IMR-90 (cell line): ENCODE measurements at regions of chr15 and their contacts with region 1.

Region 1: DNA sequence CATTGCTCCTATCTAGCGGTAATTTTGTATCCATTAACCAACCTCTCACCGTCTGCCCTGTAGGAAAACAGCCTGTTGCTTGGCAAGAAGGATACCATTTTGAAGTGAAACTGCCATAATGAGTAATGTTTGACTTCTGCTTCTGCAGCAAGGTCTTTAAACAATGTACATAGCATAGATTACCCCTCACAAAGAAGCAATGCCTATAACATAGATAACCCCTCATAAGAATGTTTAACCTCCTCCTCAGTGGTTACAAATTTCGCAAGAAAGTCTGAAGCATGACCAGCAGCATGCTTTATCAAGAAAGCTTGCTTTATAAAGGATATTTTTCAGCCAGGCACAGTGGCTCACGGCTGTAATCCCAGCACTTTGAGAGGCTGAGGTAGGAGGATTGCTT is 61.2 kb upstream of the MFGE8 start:
- DNase-seq: peak; percentile 75
- ATAC-seq: peak; percentile 77
- H3K4me3 ChIP-seq: no peak overlapping the region
- H3K27ac ChIP-seq: peak overlapping the region; percentile 75; the same call in 1 of the 2 replicates
- H3K4me1 ChIP-seq: peaks cover 3% of the 10 kb centered on the region
- H3K27me3 ChIP-seq: no peaks in the 10 kb centered on the region
- CTCF ChIP-seq: no peak
- POLR2A ChIP-seq: no peak
- RAD21 ChIP-seq: no peak

Region 2: DNA sequence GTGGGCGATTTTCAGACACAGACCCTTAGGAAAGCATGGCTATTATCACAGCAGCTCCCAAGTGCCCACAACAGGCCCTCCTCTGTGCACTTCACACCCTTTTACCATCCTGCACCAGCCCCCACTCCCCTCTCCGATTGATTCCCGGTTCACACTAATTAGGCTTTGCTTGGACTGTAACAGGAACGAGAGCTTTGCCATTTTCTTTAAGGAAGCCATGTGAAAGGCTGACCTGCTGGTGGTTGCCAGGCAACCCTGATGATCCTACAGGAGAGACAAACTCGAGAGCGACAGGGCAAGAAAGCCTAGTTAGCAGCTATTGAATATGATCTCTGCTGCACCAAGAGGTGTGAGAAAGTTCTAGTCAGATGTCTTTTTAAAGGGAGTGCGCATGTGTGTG is 399.7 kb before region 1 on chr15:
- CTCF ChIA-PET with region 1: no interaction called
- POLR2A ChIA-PET with region 1: no interaction called
- dilution Hi-C with region 1: no loop called
- in situ Hi-C with region 1: no loop called
- intact Hi-C with region 1: no loop called
- DNase-seq: no peak
- ATAC-seq: no peak
- H3K4me3 ChIP-seq: no peak overlapping the region
- H3K27ac ChIP-seq: no peak overlapping the region
- H3K4me1 ChIP-seq: no peaks in the 10 kb centered on the region
- H3K27me3 ChIP-seq: peaks cover 9% of the 10 kb centered on the region
- CTCF ChIP-seq: no peak
- POLR2A ChIP-seq: no peak
- RAD21 ChIP-seq: no peak

Region 3: DNA sequence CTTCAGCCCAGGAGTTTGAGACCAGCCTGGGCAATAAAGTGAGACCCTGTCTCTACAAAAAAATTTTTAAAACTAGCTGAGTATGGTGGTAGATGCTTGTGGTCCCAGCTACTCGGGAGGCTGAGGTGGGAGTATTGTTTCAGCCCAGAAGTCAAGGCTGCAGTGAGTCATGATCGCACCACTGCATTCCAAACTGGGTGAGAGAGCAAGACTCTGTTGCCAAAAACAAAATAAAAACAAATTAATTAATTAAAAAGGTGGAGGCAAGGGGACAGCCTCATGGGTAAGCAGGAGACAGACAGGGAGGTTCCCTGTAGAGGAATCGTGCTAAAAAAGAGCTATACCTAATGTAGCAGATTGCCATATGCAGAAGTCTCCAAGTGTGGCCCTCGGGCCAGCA is 91.6 kb before region 1 on chr15:
- CTCF ChIA-PET with region 1: no interaction called
- POLR2A ChIA-PET with region 1: no interaction called
- dilution Hi-C with region 1: no loop called
- in situ Hi-C with region 1: no loop called
- intact Hi-C with region 1: no loop called
- DNase-seq: peak; percentile 62
- ATAC-seq: peak; percentile 77
- H3K4me3 ChIP-seq: no peak overlapping the region
- H3K27ac ChIP-seq: no peak overlapping the region
- H3K4me1 ChIP-seq: peaks cover 4% of the 10 kb centered on the region
- H3K27me3 ChIP-seq: no peaks in the 10 kb centered on the region
- CTCF ChIP-seq: no peak
- POLR2A ChIP-seq: no peak
- RAD21 ChIP-seq: no peak

Region 4: DNA sequence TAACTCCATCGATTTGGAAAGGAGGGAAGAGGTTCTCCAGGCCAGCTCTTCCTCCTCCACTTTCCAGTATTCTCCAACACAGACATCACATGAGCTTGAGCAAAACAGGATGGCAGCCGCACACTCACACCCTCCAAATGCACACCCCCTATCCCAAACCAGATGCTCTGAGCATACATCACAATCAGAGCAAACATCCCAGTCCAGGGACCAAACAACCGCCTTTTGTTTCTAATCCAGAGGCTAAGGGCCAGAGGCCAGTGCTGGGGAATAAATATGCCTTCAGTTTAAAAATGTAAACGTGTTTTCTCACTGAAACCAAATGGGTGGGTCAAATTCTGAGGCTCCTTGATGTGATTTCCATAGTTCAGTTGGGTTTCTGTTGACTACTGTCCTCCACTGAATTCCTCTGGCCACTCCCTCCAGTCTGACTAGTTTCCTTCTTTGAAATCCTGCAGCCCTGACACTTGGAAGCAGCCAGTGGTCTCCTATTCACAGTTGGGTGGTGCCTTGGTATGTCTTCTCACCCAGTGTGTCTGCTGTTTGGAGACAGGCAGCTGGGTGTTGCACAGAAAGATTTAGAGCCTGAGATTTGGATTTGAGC is 42.0 kb before region 1 on chr15:
- CTCF ChIA-PET with region 1: no interaction called
- POLR2A ChIA-PET with region 1: no interaction called
- dilution Hi-C with region 1: no loop called
- in situ Hi-C with region 1: no loop called
- intact Hi-C with region 1: loop called (anchors 5 kb)
- DNase-seq: no peak
- ATAC-seq: peak; percentile 35; the same call in 1 of the 2 replicates
- H3K4me3 ChIP-seq: no peak overlapping the region
- H3K27ac ChIP-seq: no peak overlapping the region
- H3K4me1 ChIP-seq: peaks cover 4% of the 10 kb centered on the region
- H3K27me3 ChIP-seq: no peaks in the 10 kb centered on the region
- CTCF ChIP-seq: no peak
- POLR2A ChIP-seq: no peak
- RAD21 ChIP-seq: no peak

Region 5: GRCh38 chr15:88995449-88995848 is 21.1 kb after region 1 on chr15:
- CTCF ChIA-PET with region 1: no interaction called
- POLR2A ChIA-PET with region 1: no interaction called
- dilution Hi-C with region 1: no loop called
- in situ Hi-C with region 1: no loop called
- intact Hi-C with region 1: no loop called
- DNase-seq: peak; percentile 46
- ATAC-seq: peak; percentile 82
- H3K4me3 ChIP-seq: no peak overlapping the region
- H3K27ac ChIP-seq: no peak overlapping the region
- H3K4me1 ChIP-seq: peaks cover 9% of the 10 kb centered on the region
- H3K27me3 ChIP-seq: no peaks in the 10 kb centered on the region
- CTCF ChIP-seq: no peak
- POLR2A ChIP-seq: no peak
- RAD21 ChIP-seq: no peak